ENCODE measurements at regions of chr12 and their contacts with region 1.

Region 1: DNA sequence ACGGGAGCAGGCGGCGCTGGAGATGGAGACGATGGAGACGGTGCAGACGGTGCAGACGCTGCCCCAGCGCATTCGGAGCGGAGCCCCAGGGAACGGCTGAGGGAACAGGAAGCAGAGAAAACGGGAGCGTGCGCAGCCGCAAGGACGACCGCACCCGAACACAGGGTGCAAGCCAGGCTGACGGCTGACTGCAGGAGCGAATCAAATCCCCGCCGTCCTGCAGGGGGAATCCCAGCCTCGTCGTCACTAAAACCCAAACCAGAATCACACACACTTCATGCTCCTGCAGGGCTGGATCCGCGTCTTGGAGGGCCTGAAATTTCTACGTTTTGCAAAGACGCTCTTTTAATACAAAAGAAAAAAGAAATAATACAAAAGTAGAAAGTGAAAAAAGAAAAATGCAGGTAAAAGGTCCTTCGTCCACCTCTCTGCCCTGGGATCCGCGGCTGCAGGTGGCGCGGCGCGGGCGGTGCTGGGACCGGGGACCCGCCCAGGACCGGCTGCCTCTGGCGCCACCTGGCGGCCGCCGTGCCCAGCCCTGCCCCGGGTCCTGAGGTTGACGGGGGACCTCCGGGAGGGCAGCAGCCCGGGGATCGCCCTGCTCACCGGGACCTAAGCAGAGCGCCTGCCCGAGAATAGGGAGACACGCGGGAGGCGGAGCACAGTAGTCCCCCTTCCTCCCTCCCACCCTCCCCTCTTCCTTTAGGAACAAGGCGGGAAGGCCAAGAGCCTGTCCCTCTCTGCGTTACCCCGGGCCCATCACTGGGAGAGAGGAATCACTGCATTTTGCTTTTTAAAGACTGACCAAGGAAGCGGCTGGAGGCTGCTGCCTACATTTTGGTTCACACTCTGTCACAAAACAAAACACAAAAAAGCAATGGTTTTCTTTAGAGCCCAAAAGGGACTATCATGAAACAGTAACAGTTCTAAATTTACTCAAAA is 20.1 kb downstream of the STX2 start:
- DNase-seq: peak; percentile 73
- ATAC-seq: peak; percentile 97
- H3K4me3 Mint-ChIP-seq: peak overlapping the region; percentile 72
- H3K27ac Mint-ChIP-seq: peak overlapping the region; percentile 26
- H3K4me1 Mint-ChIP-seq: peaks cover 23% of the 10 kb centered on the region
- H3K27me3 Mint-ChIP-seq: no peaks in the 10 kb centered on the region

Region 2: DNA sequence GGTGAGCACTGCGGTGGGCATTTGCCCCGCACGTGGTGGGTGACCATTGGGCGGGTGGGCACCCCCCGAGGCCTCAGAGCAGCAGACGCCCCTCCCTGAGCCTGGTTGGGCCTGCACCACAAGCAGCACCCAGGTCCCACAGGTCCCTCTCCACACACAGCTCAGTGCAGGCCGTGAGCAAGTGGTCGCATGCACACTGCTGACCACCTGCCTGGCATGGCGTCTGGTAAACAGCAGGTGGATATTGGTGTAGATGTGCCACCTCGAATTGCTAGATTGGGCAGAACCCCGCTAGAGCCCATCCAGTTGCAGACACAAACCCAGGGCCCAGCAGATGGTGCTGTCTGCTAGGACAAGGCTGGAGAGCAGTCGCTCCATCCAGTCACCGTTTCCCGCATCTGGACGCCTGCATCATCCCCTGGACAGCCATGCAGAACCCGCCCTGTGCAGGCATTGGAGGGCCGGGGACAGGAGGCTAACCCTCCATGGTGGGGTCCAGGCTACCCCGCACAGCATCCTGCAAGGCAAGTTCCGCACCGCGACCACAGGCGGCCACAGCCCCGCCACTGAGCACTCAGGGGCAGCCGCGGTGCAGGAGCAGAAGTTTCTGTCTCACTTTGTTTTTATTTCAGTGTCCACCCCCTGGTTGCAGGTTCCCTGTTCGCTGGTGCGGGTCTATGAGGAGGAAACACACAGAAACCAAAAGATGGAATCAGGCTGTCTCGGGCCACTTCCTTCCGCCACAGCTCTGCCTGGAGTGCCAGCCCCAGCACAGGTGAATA is 57.2 kb before region 1 on chr12:
- CTCF ChIA-PET with region 1: interaction called, 16 read pairs
- DNase-seq: peak; percentile 75
- ATAC-seq: peak; percentile 64
- H3K4me3 Mint-ChIP-seq: peak overlapping the region; percentile 0
- H3K27ac Mint-ChIP-seq: peak overlapping the region; percentile 9
- H3K4me1 Mint-ChIP-seq: no peaks in the 10 kb centered on the region
- H3K27me3 Mint-ChIP-seq: peaks cover 3% of the 10 kb centered on the region

Region 3: GRCh38 chr12:130796985-130797686 is 21.8 kb before region 1 on chr12:
- CTCF ChIA-PET with region 1: interaction called, 13 read pairs
- DNase-seq: peak; percentile 89
- ATAC-seq: peak; percentile 94
- H3K4me3 Mint-ChIP-seq: peak overlapping the region; percentile 77
- H3K27ac Mint-ChIP-seq: peak overlapping the region; percentile 94
- H3K4me1 Mint-ChIP-seq: peaks cover 29% of the 10 kb centered on the region
- H3K27me3 Mint-ChIP-seq: no peaks in the 10 kb centered on the region

Measured in activated CD8-positive, alpha-beta memory T cell treated with anti-CD3 and anti-CD28 coated beads, Interleukin-2, amount 10 ng/mL, durations not matched to agents 7 days and 5 days (primary cell).